Tibial artery (tissue), 4 donors: ENCODE measurements at regions of chr4 and their contacts with region 1.

Region 1: DNA sequence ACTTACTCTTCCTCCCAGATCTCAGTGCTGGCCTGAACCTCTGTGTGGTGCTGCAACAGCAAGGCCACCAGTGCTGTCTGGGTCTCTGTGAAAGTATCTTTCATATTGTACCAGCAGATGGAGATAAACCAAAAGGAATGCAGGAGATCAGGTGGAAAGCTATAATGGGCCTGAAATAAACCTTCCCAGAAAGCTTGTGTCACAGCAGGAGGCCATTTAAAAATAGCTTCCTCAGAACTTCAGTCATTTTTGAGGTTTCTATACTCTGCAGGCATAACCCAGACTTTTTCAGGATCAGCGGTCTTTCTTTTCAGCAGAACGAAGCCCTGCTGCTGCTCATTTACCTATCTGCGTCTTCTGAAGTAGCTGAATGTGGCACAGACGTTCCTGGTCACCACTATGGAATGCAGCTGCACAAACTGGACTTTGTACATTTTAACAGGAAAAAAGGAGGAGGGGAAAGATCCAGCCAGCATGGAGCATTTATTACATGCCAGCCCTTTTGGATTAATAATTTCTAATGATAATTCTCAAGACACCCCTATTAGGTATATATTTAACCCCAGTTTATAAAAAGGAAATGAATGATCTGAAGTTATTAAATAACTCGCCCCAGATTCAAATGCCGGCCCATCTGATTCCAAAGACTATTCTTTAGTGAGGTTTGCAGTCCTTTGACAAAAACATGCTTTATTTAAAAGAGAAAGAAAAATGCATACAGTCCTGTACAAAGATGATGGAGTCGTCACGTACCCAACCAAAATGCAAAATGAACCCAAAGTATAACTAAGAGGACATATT is 119.7 kb downstream of the NFKB1 start:
- DNase-seq: no peak
- H3K4me3 ChIP-seq: no peak overlapping the region
- H3K27ac ChIP-seq: peak overlapping the region in 1 of 2 donors; percentile 41
- H3K4me1 ChIP-seq: peaks cover 0 to 11% (median 10%) of the 10 kb centered on the region in 4 donors
- H3K27me3 ChIP-seq: no peaks in the 10 kb centered on the region
- CTCF ChIP-seq: peak; percentile 46 to 59

Region 2: GRCh38 chr4:102871772-102872171 is 250.9 kb after region 1 on chr4:
- intact Hi-C with region 1: no loop called
- DNase-seq: no peak
- H3K4me3 ChIP-seq: no peak overlapping the region
- H3K27ac ChIP-seq: no peak overlapping the region
- H3K4me1 ChIP-seq: peaks cover 0 to 29% (median 2%) of the 10 kb centered on the region in 4 donors
- H3K27me3 ChIP-seq: no peaks in the 10 kb centered on the region
- CTCF ChIP-seq: no peak

Region 3: GRCh38 chr4:103008875-103009729 is 388.2 kb after region 1 on chr4:
- intact Hi-C with region 1: loop called (anchors 5 kb)
- DNase-seq: no peak
- H3K4me3 ChIP-seq: no peak overlapping the region
- H3K27ac ChIP-seq: no peak overlapping the region
- H3K4me1 ChIP-seq: peaks cover 0 to 16% (median 10%) of the 10 kb centered on the region in 4 donors
- H3K27me3 ChIP-seq: no peaks in the 10 kb centered on the region
- CTCF ChIP-seq: peak; percentile 67 to 79